ENCODE measurements at regions of chr12 and their contacts with region 1.

Region 1: DNA sequence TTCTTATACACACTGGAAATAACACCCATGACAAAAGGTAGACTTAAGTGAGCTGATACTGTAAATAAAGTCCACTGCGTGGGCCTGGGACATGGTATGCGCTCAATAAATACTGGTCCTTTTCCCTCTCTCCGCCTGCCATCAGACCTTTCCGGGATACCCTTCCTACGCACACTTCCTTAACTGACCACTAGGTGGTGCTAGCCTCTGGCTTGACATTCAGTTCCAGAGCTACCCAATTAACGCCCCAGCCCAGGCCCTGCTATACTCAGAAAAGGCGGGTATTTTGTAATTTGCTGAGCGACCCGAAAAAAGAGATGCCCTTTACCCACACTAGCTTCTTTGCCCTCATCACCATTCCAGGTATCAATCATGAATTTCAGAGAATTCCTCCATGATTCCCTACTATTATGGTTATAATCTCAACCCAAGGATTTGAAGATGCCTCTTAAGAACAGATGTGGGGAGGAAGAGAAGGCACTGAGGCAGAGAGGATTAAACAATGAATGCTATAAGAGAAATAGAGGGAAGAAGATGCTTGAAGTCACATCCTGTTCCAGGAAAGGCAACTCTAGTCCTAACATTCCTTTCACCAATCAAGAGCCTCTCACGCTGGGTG is 3.9 kb upstream of the LRP1 start:
- DNase-seq: no peak
- H3K4me3 ChIP-seq: no peak overlapping the region
- CTCF ChIP-seq: peak; percentile 88

Region 2: GRCh38 chr12:56258057-56258819 is 866.1 kb before region 1 on chr12 and contains the start of gene ANKRD52:
- CTCF ChIA-PET with region 1: no interaction called
- POLR2A ChIA-PET with region 1: no interaction called
- DNase-seq: no peak
- H3K4me3 ChIP-seq: peak within 1 kb of the TSS; percentile 80
- CTCF ChIP-seq: peak; percentile 72

Region 3: DNA sequence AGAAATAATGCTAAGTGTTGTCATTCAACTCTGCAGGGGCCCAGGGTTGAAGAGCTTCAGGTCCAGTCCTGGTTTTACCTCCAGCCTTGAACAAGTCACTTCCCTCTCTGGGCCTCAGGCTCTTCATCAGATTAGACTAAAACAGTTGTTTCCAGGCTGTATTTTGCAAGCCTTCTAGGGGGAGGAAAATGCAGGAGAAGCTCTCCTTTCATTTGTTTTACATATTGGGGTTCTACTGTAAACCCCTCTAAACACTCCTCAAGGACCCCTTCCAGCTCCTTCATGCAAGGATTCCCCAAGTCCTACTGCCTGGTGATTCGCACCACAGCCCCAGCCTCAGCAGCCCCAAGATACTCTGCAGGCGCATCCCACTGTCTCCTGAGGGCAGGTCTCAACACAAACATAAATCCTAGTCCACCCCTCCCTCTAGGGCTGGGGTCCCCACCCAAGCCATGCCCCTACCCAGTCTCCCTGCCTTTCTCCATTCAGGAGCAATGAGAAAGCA is 192.8 kb before region 1 on chr12:
- CTCF ChIA-PET with region 1: no interaction called
- POLR2A ChIA-PET with region 1: no interaction called
- DNase-seq: peak; percentile 16
- H3K4me3 ChIP-seq: no peak overlapping the region
- CTCF ChIP-seq: no peak

Region 4: GRCh38 chr12:57001448-57001906 is 122.9 kb before region 1 on chr12:
- CTCF ChIA-PET with region 1: no interaction called
- POLR2A ChIA-PET with region 1: no interaction called
- DNase-seq: no peak
- H3K4me3 ChIP-seq: no peak overlapping the region
- CTCF ChIP-seq: peak; percentile 66

Region 5: DNA sequence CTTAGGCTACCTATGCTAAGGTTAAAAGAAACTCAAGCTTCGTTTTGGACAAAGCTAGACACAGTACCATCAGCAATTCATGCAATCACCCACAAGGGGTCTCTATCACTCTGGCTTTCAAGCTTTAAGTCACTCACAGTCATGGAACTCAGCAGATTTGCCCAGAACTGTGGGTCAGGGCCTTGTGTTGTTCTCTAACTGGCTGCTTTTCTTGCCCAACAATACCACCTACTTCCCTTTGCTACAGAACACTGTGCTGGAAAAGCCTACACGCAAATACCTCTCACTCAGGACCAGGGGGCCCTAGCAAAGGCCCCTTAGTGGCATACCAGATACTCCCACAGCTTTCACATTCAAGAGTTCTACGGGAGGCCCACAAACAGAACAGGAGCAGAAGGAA is 54.8 kb before region 1 on chr12:
- CTCF ChIA-PET with region 1: interaction called, 148 read pairs
- POLR2A ChIA-PET with region 1: interaction called, 3 read pairs
- DNase-seq: no peak
- H3K4me3 ChIP-seq: no peak overlapping the region
- CTCF ChIP-seq: peak; percentile 70

Region 6: GRCh38 chr12:57088459-57089248 is 35.7 kb before region 1 on chr12 and contains the start of gene NAB2:
- CTCF ChIA-PET with region 1: interaction called, 26 read pairs
- POLR2A ChIA-PET with region 1: interaction called, 10 read pairs
- DNase-seq: peak; percentile 82
- H3K4me3 ChIP-seq: peak within 1 kb of the TSS; percentile 91
- CTCF ChIP-seq: no peak

Region 7: DNA sequence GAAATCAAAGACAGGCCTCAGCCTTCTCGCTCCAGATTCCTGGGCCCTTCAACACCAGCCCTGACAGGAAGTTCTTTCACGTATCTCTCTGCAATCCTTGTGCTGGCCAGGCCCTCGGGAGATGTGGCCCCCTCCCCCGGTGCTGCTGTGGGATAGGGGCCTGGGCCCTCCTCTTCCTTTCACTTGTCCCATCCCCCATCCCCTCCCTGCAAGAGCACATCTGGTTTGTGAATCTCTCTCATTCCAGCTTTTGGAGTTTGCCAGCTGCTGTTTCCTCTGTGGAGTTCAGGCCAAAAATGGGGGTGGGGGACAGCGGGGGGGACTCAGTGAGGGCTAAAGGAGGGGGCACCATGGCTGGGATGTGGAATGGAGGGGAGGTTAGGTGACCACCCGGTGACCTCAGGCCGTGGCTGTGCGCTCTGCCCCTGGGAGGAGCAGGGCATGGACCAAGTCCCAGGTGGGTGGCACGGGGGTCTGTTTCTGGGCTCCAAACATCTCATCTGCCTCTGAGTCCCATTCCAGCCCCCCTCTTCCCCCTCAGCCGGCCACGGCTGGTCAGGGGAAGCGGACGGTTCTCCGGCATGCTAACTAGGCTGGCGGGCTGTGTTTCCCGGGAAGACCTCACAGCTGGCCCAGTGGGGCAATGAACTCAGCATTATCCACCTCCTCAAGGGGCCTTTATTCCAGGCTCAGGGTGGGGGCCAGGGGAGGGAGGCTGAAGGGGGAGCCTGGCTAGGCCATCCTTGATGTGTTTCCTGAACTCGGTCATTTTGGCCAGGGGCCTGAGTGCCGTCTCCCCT is 11.4 kb after region 1 on chr12:
- CTCF ChIA-PET with region 1: interaction called, 39 read pairs
- POLR2A ChIA-PET with region 1: interaction called, 7 read pairs
- DNase-seq: no peak
- H3K4me3 ChIP-seq: peak overlapping the region; percentile 27
- CTCF ChIP-seq: no peak

Region 8: DNA sequence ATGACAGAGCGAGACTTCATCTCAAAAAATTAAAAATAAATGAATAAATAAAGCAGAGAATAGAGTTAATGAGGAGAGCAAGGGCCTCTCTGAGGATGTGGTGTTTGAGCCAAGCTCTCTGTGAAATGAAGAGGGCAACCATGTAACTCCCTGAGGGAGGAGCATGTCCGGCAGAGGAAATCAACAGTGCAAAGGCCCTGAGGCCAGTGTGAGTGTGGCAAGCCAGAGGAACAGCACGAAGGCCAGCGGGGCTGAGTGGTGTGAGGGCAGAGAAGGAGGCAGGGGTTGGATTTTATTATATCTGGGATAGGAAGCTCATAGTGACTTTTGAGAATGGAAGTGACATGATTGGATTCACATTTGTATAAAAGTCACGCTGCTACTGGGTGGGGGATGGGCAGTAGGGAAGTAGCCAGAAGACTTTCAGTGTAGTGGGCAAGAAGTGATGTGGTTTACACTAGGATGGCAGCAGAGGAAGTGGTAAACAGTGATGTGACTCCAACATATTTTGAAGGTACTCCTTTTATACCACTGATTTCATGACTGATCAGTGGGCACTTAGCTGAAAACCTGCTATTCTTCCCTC is 33.3 kb after region 1 on chr12:
- CTCF ChIA-PET with region 1: interaction called, 67 read pairs
- POLR2A ChIA-PET with region 1: interaction called, 3 read pairs
- DNase-seq: no peak
- H3K4me3 ChIP-seq: no peak overlapping the region
- CTCF ChIP-seq: no peak

Region 9: DNA sequence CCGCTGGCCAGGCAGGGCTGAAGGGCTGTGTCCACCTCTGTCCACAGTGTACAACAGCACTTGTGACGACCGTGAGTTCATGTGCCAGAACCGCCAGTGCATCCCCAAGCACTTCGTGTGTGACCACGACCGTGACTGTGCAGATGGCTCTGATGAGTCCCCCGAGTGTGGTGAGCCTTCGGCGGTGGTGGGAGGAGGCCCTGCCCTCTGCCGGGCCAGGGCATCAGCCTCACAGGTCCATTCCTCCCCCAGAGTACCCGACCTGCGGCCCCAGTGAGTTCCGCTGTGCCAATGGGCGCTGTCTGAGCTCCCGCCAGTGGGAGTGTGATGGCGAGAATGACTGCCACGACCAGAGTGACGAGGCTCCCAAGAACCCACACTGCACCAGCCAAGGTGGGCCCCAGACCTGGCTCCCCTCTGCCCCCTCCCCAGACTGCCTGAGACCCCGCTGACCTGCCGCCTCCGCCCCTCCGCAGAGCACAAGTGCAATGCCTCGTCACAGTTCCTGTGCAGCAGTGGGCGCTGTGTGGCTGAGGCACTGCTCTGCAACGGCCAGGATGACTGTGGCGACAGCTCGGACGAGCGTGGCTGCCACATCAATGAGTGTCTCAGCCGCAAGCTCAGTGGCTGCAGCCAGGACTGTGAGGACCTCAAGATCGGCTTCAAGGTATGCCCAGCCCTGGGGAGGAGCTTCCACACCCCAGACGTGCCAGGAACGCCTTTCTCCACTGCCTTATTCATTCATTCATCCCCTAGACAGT is 71.4 kb after region 1 on chr12:
- CTCF ChIA-PET with region 1: interaction called, 874 read pairs
- POLR2A ChIA-PET with region 1: no interaction called
- DNase-seq: no peak
- H3K4me3 ChIP-seq: no peak overlapping the region
- CTCF ChIP-seq: no peak

Region 10: GRCh38 chr12:57229634-57230380 is 105.4 kb after region 1 on chr12 and contains the start of gene SHMT2:
- CTCF ChIA-PET with region 1: interaction called, 20 read pairs
- POLR2A ChIA-PET with region 1: interaction called, 5 read pairs
- DNase-seq: peak; percentile 78
- H3K4me3 ChIP-seq: peak within 1 kb of the TSS; percentile 93
- CTCF ChIP-seq: no peak

Region 11: GRCh38 chr12:57332646-57333312 is 208.4 kb after region 1 on chr12:
- CTCF ChIA-PET with region 1: no interaction called
- POLR2A ChIA-PET with region 1: no interaction called
- DNase-seq: no peak
- H3K4me3 ChIP-seq: no peak overlapping the region
- CTCF ChIP-seq: no peak

Measured in AG04449 (cell line).